H1 (cell line): ENCODE measurements at regions of chr11 and their contacts with region 1.

Region 1: DNA sequence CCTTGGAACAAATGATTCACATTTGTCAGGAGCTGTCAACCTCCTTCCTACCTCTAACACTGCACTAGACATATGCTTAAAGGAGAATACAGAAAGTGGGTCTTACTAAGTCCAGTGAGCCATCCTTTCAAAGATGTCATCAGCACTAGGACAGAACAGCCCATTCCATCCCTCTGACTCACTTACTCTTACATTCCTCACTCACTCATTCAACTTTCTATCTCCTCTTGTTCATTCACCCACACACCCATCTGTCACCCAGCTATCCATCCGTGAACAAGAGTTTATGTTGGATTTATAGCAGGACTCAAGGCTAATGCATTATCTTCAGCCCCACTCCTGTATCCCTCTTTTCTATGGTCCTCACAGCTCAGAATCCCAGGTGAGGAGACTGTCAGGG is 9.1 kb downstream of the INSC start:
- DNase-seq: no peak
- H3K4me3 ChIP-seq: no peak overlapping the region
- H3K27ac ChIP-seq: no peak overlapping the region
- H3K4me1 ChIP-seq: no peaks in the 10 kb centered on the region
- H3K27me3 ChIP-seq: no peaks in the 10 kb centered on the region
- CTCF ChIP-seq: no peak
- EP300 ChIP-seq: no peak
- POLR2A ChIP-seq: no peak
- RAD21 ChIP-seq: no peak

Region 2: DNA sequence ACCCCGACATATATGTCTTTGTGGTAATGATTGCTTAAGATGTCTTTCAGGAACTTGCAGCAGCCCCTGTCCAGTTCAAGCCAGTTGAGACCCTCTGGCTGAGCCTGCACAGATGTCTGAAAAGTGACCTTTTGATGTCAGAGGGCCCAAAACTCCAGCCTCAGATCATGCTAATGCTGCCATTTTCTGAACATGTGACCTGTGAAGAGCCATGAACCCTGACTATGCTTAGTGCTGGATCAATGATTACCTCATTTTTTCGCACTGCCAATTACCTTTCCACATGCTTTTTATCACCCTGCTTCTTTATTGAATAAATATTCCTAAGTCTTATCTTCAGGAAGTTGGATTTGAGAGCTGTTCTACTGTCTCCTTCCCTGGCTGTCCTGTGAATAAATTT is 224.9 kb before region 1 on chr11:
- CTCF ChIA-PET with region 1: no interaction called
- POLR2A ChIA-PET with region 1: no interaction called
- DNase-seq: no peak
- H3K4me3 ChIP-seq: no peak overlapping the region
- H3K27ac ChIP-seq: no peak overlapping the region
- H3K4me1 ChIP-seq: no peaks in the 10 kb centered on the region
- H3K27me3 ChIP-seq: peaks cover 0 to 2% (median 0%) of the 10 kb centered on the region in 4 experiments; a peak in 1 of 7 replicates
- CTCF ChIP-seq: no peak
- EP300 ChIP-seq: no peak
- POLR2A ChIP-seq: no peak
- RAD21 ChIP-seq: no peak

Region 3: DNA sequence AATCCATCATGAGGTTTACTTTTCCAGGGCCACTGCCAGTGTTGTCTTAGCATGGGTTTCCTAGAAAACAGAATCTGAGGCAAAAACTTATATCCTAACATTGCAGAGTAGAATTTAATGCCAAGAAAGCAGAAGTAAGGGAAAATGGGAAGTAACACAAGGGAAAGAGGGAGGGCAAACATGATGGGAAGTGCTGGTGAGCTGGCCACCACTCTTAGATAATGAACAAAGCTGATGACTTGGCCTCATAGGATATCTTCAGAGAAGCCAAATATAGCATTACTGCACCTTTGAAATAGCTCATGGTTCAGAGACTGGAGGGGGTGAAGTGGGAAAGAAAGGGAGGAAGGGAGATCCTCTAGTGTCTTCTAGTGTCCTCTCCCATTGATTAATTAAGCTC is 75.2 kb before region 1 on chr11:
- CTCF ChIA-PET with region 1: no interaction called
- POLR2A ChIA-PET with region 1: no interaction called
- DNase-seq: no peak
- H3K4me3 ChIP-seq: no peak overlapping the region
- H3K27ac ChIP-seq: no peak overlapping the region
- H3K4me1 ChIP-seq: no peaks in the 10 kb centered on the region
- H3K27me3 ChIP-seq: no peaks in the 10 kb centered on the region
- CTCF ChIP-seq: no peak
- EP300 ChIP-seq: no peak
- POLR2A ChIP-seq: no peak
- RAD21 ChIP-seq: no peak

Region 4: GRCh38 chr11:15141381-15141780 is 17.5 kb after region 1 on chr11:
- CTCF ChIA-PET with region 1: interaction called, 17 read pairs
- POLR2A ChIA-PET with region 1: no interaction called
- DNase-seq: no peak
- H3K4me3 ChIP-seq: no peak overlapping the region
- H3K27ac ChIP-seq: no peak overlapping the region
- H3K4me1 ChIP-seq: peaks cover 0 to 7% (median 3%) of the 10 kb centered on the region in 4 experiments; a peak in 3 of 7 replicates
- H3K27me3 ChIP-seq: no peaks in the 10 kb centered on the region
- CTCF ChIP-seq: no peak
- EP300 ChIP-seq: no peak
- POLR2A ChIP-seq: no peak
- RAD21 ChIP-seq: no peak

Region 5: DNA sequence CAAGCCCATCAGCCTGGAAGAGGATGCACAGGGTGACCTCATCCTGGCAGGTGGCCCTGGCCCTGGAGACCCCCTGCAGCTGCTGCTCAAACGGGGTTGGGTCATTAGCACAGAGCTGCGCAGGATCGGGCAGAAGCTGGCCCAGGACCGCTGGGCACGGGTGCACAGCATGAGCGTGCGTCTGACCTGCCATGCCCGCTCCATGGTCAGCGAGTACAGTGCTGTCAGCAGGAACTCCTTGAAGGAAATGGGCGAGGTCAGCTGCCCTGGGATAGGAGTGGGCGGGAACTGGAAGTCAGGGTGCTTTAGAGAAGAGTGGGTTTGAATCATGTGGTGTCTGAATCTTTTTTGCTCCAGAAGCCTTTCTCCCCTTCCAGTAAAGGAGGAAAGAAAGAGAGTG is 52.0 kb after region 1 on chr11:
- CTCF ChIA-PET with region 1: no interaction called
- POLR2A ChIA-PET with region 1: no interaction called
- DNase-seq: no peak
- H3K4me3 ChIP-seq: no peak overlapping the region
- H3K27ac ChIP-seq: no peak overlapping the region
- H3K4me1 ChIP-seq: no peaks in the 10 kb centered on the region
- H3K27me3 ChIP-seq: no peaks in the 10 kb centered on the region
- CTCF ChIP-seq: no peak
- EP300 ChIP-seq: no peak
- POLR2A ChIP-seq: no peak
- RAD21 ChIP-seq: no peak